Naive thymus-derived CD4-positive, alpha-beta T cell (primary cell): ENCODE measurements at regions of chr11 and their contacts with region 1.

Region 1: GRCh38 chr11:125111343-125112207 is at the start of gene TMEM218:
- DNase-seq: peak; percentile 81 to 97 (median 93)
- ATAC-seq: peak; percentile 97
- H3K4me3 ChIP-seq: peak within 1 kb of the TSS; percentile 81
- H3K4me3 Mint-ChIP-seq: peak within 1 kb of the TSS; percentile 91 to 100 (median 96)
- H3K27ac ChIP-seq: peak within 1 kb of the TSS; percentile 77
- H3K27ac Mint-ChIP-seq: peak within 1 kb of the TSS; percentile 91 to 97 (median 94)
- H3K4me1 ChIP-seq: peaks cover 0 to 8% of the 10 kb centered on the region in 2 donors
- H3K4me1 Mint-ChIP-seq: peaks cover 0 to 33% (median 22%) of the 10 kb centered on the region in 7 donors
- H3K27me3 ChIP-seq: no peaks in the 10 kb centered on the region
- H3K27me3 Mint-ChIP-seq: peaks cover 0 to 2% (median 0%) of the 10 kb centered on the region in 5 donors
- total RNA-seq, gene TMEM218: 10.2 to 18.5 (median 13.9) TPM

Region 2: GRCh38 chr11:123885570-123885969 is 1226.0 kb before region 1 on chr11 and contains the start of gene TMEM225:
- CTCF ChIA-PET with region 1: no interaction called
- POLR2A ChIA-PET with region 1: no interaction called
- intact Hi-C with region 1: no loop called
- DNase-seq: no peak
- ATAC-seq: no peak
- H3K4me3 ChIP-seq: no peak within 1 kb of the TSS
- H3K4me3 Mint-ChIP-seq: no peak within 1 kb of the TSS
- H3K27ac ChIP-seq: no peak within 1 kb of the TSS
- H3K27ac Mint-ChIP-seq: no peak within 1 kb of the TSS
- H3K4me1 ChIP-seq: no peaks in the 10 kb centered on the region
- H3K4me1 Mint-ChIP-seq: no peaks in the 10 kb centered on the region
- H3K27me3 ChIP-seq: no peaks in the 10 kb centered on the region
- H3K27me3 Mint-ChIP-seq: peaks cover 0 to 7% (median 0%) of the 10 kb centered on the region in 5 donors
- total RNA-seq, gene TMEM225: not detected

Region 3: GRCh38 chr11:124673333-124674167 is 438.0 kb before region 1 on chr11 and contains the starts of genes SIAE and SPA17:
- CTCF ChIA-PET with region 1: no interaction called
- POLR2A ChIA-PET with region 1: interaction called, 5 read pairs
- intact Hi-C with region 1: loop called (anchors 1 kb)
- DNase-seq: peak; percentile 63 to 92 (median 87)
- ATAC-seq: peak; percentile 91
- H3K4me3 ChIP-seq: peak within 1 kb of the TSS; percentile 76
- H3K4me3 Mint-ChIP-seq: peak within 1 kb of the TSS in 9 of 10 donors; percentile 82 to 94 (median 91)
- H3K27ac ChIP-seq: peak within 1 kb of the TSS; percentile 91
- H3K27ac Mint-ChIP-seq: peak within 1 kb of the TSS in 7 of 9 donors; percentile 94 to 100 (median 98)
- H3K4me1 ChIP-seq: peaks cover 14 to 40% of the 10 kb centered on the region in 2 donors
- H3K4me1 Mint-ChIP-seq: peaks cover 22 to 39% (median 31%) of the 10 kb centered on the region in 7 donors
- H3K27me3 ChIP-seq: no peaks in the 10 kb centered on the region
- H3K27me3 Mint-ChIP-seq: peaks cover 0 to 4% (median 0%) of the 10 kb centered on the region in 5 donors
- total RNA-seq, gene SIAE: 6.2 to 11.3 (median 10.4) TPM
- total RNA-seq, gene SPA17: 1.00 to 1.1 (median 1.0) TPM

Region 4: GRCh38 chr11:124875943-124876817 is 235.4 kb before region 1 on chr11:
- CTCF ChIA-PET with region 1: no interaction called
- POLR2A ChIA-PET with region 1: interaction called, 3 read pairs
- intact Hi-C with region 1: loop called (anchors 1 kb)
- DNase-seq: peak; percentile 71 to 84 (median 81)
- ATAC-seq: peak; percentile 94
- H3K4me3 ChIP-seq: peak overlapping the region; percentile 98
- H3K4me3 Mint-ChIP-seq: peak overlapping the region; percentile 85 to 94 (median 90)
- H3K27ac ChIP-seq: peak overlapping the region; percentile 79
- H3K27ac Mint-ChIP-seq: peak overlapping the region; percentile 77 to 95 (median 92)
- H3K4me1 ChIP-seq: peaks cover 7 to 9% of the 10 kb centered on the region in 2 donors
- H3K4me1 Mint-ChIP-seq: peaks cover 11 to 34% (median 24%) of the 10 kb centered on the region in 7 donors
- H3K27me3 ChIP-seq: peaks cover 0 to 3% of the 10 kb centered on the region in 2 donors
- H3K27me3 Mint-ChIP-seq: peaks cover 18 to 49% (median 34%) of the 10 kb centered on the region in 5 donors

Region 5: DNA sequence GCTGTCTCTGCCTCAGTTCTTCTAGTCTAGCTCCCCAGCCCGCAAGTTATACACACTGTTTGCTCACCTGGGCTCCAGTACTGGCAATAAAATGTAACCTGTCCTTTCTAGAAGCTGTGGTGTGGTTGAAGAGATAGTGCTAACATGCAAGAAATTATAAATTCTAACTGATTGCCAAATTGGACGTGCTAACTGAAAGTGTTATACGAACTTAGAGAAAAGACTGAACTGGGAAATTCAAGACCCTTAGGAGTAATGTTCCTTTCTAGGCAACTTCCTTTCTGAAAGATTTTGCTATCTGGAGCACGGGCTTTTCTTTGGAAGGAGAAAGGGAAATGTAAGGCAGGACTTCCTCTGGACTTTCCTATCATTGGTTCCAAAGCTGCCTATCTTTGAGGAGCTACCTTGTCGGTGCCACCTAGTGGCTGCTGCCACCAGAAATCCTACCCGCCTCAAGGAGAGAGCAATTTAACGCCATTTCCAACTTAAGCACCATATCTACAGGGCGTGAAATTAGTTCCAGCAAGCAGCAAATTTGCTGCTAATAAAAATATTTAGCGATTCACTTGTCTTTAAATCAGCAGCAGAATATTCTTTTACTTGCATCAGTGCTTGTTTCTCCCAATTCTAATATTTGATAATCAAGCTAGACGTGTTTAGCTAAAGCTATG is 12.5 kb after region 1 on chr11:
- CTCF ChIA-PET with region 1: interaction called, 4 read pairs
- POLR2A ChIA-PET with region 1: interaction called, 5 read pairs
- intact Hi-C with region 1: loop called in 1 of 2 experiments (anchors 1 kb)
- DNase-seq: peak in 5 of 9 donors; percentile 16 to 29 (median 20)
- ATAC-seq: peak; percentile 78
- H3K4me3 ChIP-seq: no peak overlapping the region
- H3K4me3 Mint-ChIP-seq: no peak overlapping the region
- H3K27ac ChIP-seq: no peak overlapping the region
- H3K27ac Mint-ChIP-seq: no peak overlapping the region
- H3K4me1 ChIP-seq: no peaks in the 10 kb centered on the region
- H3K4me1 Mint-ChIP-seq: peaks cover 0 to 8% (median 0%) of the 10 kb centered on the region in 7 donors
- H3K27me3 ChIP-seq: peaks cover 0 to 7% of the 10 kb centered on the region in 2 donors
- H3K27me3 Mint-ChIP-seq: peaks cover 26 to 45% (median 43%) of the 10 kb centered on the region in 5 donors

Region 6: GRCh38 chr11:125887373-125888324 is 776.1 kb after region 1 on chr11 and contains the start of gene HYLS1:
- CTCF ChIA-PET with region 1: no interaction called
- POLR2A ChIA-PET with region 1: interaction called, 3 read pairs
- intact Hi-C with region 1: loop called in 1 of 2 experiments (anchors 1 kb)
- DNase-seq: peak; percentile 90 to 100 (median 94)
- ATAC-seq: peak; percentile 95
- H3K4me3 ChIP-seq: peak within 1 kb of the TSS; percentile 86
- H3K4me3 Mint-ChIP-seq: peak within 1 kb of the TSS; percentile 87 to 98 (median 96)
- H3K27ac ChIP-seq: peak within 1 kb of the TSS; percentile 71
- H3K27ac Mint-ChIP-seq: peak within 1 kb of the TSS; percentile 88 to 99 (median 97)
- H3K4me1 ChIP-seq: peaks cover 6% of the 10 kb centered on the region in 2 donors
- H3K4me1 Mint-ChIP-seq: peaks cover 20 to 57% (median 39%) of the 10 kb centered on the region in 7 donors
- H3K27me3 ChIP-seq: no peaks in the 10 kb centered on the region
- H3K27me3 Mint-ChIP-seq: peaks cover 0 to 4% (median 0%) of the 10 kb centered on the region in 5 donors
- total RNA-seq, gene HYLS1: 2.7 to 13.1 (median 8.0) TPM

Region 7: GRCh38 chr11:126303623-126304456 is 1192.3 kb after region 1 on chr11 and contains the start of gene DCPS:
- CTCF ChIA-PET with region 1: no interaction called
- POLR2A ChIA-PET with region 1: no interaction called
- intact Hi-C with region 1: loop called (anchors 1 to 5 kb)
- DNase-seq: peak; percentile 78 to 94 (median 86)
- ATAC-seq: peak; percentile 99
- H3K4me3 ChIP-seq: peak within 1 kb of the TSS; percentile 100
- H3K4me3 Mint-ChIP-seq: peak within 1 kb of the TSS; percentile 91 to 99 (median 97)
- H3K27ac ChIP-seq: peak within 1 kb of the TSS; percentile 97
- H3K27ac Mint-ChIP-seq: peak within 1 kb of the TSS; percentile 87 to 99 (median 96)
- H3K4me1 ChIP-seq: peaks cover 18 to 20% of the 10 kb centered on the region in 2 donors
- H3K4me1 Mint-ChIP-seq: peaks cover 19 to 50% (median 45%) of the 10 kb centered on the region in 7 donors
- H3K27me3 ChIP-seq: no peaks in the 10 kb centered on the region
- H3K27me3 Mint-ChIP-seq: no peaks in the 10 kb centered on the region
- total RNA-seq, gene DCPS: 11.0 to 37.2 (median 17.4) TPM